ENCODE measurements at regions of chr2 and their contacts with region 1.

Region 1: GRCh38 chr2:128321784-128322714 is 3.4 kb upstream of the HS6ST1 start:
- DNase-seq: peak; percentile 52
- H3K4me3 ChIP-seq: peak overlapping the region; percentile 38
- CTCF ChIP-seq: peak; percentile 67

Region 2: DNA sequence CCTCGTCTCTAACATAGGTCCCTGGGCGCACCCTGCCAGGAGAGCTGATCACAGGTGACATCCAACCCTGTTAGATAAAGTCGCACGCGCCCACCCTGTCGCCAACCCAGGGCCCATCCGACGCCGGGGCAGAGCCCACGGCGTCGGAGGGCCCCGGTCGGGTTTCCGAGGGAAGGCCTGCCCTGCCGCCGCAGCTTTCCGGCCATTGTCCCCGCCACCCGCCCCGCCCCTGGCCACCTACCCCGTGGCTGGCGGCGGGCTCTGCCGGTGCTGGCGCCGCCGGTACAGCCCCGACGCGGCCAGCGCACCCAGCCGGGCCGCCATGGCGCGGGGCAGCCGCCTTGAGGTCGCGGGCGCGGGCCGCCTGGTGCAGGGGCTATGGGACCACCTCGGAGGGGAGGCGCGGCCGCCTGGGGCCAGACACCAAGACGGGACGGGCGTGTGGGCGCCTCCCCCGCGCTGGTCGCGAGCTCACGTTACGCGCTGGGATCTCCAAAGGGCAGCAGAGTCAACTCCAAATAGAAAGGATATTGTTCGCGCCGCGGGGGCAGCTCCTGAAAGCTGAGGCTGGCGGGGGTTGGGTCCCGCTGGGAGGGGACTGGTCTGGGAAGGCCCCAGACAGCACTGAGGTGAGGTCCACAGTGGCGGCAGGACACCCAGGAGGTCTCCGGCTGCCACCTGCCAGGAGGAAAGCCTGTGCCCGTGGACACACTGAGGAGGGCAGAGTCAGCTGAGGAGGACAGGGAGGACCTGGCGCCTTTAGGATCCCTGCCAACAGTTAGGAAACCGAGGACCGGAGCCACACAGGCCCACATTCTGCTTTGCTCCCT is 657.8 kb before region 1 on chr2:
- in situ Hi-C with region 1: no loop called
- DNase-seq: no peak
- H3K4me3 ChIP-seq: peak overlapping the region; percentile 15
- CTCF ChIP-seq: no peak

Region 3: DNA sequence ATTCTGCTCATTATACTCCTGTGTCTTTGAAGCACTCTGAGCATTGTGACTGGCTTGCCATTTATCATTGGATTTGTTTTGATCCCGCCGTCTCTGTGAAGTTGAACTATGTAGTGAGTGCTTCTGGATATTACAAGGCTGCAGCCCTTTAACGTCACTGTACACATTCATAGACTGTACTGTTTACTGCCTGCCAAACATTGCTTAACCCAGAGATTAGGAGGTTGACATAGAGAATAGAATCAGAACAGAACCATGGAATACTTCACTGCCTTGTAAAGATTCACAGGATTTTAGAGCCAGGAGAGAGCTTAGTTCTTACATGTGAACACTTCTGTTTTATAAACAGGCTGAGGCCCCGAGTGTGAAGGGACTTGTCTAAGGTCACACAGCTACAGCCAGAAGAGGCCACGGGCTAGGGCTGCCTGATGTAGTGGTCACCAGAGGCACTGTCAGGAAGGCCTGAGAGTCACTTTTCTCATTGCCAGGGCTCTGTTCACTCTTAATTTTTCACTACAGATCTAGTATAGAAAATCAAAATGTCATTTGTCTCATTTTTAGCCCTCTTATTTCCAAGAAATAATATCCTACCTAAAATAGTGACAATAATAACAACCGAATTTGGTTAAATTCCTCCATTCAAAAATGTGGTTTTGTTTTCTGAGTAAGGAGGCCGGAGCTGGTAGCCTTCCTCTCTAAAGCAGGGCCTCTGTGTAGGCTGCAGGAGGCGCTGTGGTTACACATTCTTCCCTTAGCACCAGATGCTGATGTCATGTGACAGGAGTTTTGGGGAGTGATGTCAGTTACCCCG is 143.2 kb before region 1 on chr2:
- in situ Hi-C with region 1: loop called (anchors 25 kb)
- DNase-seq: peak; percentile 63
- H3K4me3 ChIP-seq: no peak overlapping the region
- CTCF ChIP-seq: peak; percentile 95

Region 4: DNA sequence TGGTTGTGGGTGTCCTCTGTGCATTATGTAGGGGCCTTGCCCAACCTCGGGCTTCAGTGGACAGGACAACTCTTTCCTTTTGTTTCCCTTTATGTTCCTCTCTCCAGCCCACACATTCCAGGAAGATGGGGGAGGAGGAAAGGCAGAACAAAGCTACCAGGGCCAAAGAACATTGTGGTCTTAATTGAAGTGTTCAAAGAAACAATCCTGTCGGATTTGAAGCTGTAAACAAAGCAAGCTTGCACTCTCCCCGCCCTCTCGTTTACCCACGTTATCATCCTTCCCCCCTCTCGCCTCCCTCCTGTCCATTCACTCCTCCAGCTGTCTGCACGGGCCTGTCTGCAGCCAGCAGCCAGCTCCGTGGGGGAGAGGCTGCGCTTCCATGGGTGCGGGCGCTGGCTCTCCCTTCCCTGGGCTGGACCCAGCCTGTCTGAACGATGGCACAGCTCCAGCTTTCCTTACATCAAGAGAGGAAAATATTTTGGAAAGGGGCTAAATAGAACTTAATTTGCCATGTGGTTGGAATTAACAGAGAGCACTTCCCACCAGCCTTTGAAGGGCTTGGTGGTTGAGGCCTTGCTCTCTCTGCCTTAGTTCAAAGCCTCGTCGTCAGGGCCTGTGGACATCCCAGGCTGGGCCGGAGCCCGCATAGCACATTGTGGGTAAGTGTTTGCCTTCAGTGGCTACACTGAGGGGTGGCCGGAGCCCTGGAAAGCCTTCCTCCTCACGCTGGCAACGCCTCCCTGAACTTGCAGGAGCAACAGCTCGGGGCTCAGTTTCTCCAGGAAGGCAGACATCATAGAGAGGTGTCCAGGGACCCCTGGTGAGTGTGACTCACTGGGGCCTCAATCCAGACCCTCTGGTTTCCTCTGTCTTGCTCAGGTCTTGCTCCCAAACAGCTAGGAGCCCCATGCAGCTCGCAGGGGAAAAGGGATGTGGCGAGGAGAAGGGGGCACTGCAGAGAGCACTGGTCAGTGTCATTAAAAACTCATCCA is 57.3 kb after region 1 on chr2:
- in situ Hi-C with region 1: loop called (anchors 5 kb)
- DNase-seq: peak; percentile 53
- H3K4me3 ChIP-seq: no peak overlapping the region
- CTCF ChIP-seq: no peak

Region 5: DNA sequence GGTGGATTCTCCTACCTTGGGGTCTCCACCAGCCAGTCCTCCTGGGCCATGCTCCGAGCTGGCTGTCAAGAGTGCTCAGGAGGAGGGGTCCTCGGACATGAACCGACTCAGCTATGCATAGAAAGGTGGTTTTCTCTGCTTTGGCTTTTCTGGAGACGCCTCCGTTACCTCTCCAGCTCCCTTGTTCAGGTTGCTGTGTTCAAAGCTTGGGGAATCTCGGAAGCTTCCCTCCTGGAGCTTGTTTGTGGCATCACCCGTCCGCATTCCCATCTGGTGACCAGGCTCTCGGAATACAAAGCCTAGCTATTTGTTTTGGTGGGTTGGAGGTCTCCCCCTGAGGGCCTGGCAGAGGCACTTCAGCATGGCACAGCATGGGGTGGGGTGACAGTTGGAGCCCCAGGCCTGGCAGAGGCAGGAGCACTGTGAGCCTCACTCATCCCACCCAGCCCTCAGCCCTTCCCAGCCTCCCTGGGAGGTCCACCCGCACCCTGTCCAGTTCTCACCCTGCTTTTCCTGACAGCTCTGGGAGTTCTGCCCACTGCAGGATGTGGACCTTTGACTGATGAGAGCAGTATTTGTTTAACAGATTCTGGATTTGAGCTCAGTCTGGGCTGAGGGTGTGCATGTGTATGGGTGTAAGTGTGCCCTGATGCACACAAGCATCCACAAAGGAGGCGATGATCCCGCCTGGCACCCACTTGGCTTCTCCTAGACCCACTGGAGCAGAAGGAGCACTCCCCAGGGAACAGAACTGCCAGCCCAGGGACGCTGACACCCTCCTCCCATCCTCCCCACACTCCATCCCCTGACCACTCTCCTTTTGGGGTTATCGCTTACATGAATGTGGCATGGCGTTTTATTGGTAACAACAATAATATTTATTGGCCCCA is 103.9 kb after region 1 on chr2:
- in situ Hi-C with region 1: loop called (anchors 5 kb)
- DNase-seq: peak; percentile 26
- H3K4me3 ChIP-seq: no peak overlapping the region
- CTCF ChIP-seq: no peak

Region 6: DNA sequence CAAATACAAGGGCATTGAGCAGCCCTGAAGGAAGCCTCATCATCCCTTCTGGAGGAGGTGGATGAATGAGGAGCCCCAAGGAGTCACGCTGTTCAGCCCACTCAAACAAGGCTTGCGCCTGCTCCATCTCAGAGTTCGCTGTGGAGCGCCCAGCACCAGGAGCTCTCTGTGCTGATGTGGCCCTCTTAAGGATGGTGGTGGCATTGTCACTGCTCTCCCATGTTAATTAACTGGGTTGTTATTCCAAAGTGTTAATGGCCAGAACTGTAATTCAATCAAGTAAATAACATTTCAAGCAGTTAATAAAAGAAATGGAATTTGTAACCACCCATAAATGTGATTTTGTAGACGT is 931.4 kb after region 1 on chr2:
- in situ Hi-C with region 1: loop called (anchors 25 kb)
- DNase-seq: no peak
- H3K4me3 ChIP-seq: no peak overlapping the region
- CTCF ChIP-seq: peak; percentile 57

Region 7: DNA sequence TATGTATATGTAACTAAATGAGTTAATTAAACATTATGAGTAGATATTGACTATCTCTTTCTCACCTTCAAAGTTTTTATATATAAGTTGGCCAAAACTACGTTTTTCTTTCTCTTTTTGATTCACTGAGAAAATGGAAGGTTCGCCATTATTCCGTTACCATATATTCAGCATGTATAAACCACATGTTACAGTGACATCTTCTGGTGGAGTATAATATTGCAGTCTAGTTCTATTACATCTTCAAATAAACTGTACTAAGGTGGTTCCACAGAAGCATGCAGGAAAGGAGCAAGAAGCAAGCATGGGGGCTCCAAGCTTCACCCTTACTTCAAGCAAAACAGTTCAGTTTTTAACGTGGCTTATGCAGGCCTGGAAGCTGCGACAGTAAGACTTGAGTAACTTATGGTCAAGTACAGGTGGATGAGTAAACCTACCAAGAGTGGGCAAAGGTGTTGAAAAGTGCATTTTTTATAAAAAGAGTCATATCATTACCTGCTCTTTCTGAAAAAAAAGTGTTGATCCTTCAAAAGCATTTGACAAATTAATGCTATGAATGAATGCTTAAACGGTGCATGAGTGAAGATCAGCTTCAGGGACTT is 1527.6 kb after region 1 on chr2:
- in situ Hi-C with region 1: loop called (anchors 10 kb)
- DNase-seq: peak; percentile 83
- H3K4me3 ChIP-seq: no peak overlapping the region
- CTCF ChIP-seq: peak; percentile 47

Measured in astrocyte of the cerebellum (primary cell).